Gastrocnemius medialis (tissue), 4 donors: ENCODE measurements at regions of chr20 and their contacts with region 1.

Region 1: GRCh38 chr20:50987592-50988210 is 29.1 kb downstream of the MOCS3 start:
- DNase-seq: peak; percentile 48
- ATAC-seq: peak; percentile 98 to 99
- H3K4me3 ChIP-seq: no peak overlapping the region
- H3K27ac ChIP-seq: no peak overlapping the region
- H3K4me1 ChIP-seq: peaks cover 0 to 3% of the 10 kb centered on the region in 2 donors
- H3K27me3 ChIP-seq: peaks cover 15 to 24% (median 21%) of the 10 kb centered on the region in 3 donors
- CTCF ChIP-seq: peak; percentile 74 to 88 (median 84)
- POLR2A ChIP-seq: no peak

Region 2: GRCh38 chr20:51022803-51023630 is 35.3 kb after region 1 on chr20 and contains the start of gene KCNG1:
- in situ Hi-C with region 1: no loop called
- intact Hi-C with region 1: no loop called
- DNase-seq: no peak
- ATAC-seq: peak; percentile 56 to 58
- H3K4me3 ChIP-seq: peak within 1 kb of the TSS; percentile 39 to 46 (median 43)
- H3K27ac ChIP-seq: no peak within 1 kb of the TSS
- H3K4me1 ChIP-seq: peaks cover 0 to 4% of the 10 kb centered on the region in 2 donors
- H3K27me3 ChIP-seq: peaks cover 18 to 24% (median 22%) of the 10 kb centered on the region in 3 donors
- CTCF ChIP-seq: no peak
- POLR2A ChIP-seq: no peak
- total RNA-seq, gene KCNG1: not detected

Region 3: DNA sequence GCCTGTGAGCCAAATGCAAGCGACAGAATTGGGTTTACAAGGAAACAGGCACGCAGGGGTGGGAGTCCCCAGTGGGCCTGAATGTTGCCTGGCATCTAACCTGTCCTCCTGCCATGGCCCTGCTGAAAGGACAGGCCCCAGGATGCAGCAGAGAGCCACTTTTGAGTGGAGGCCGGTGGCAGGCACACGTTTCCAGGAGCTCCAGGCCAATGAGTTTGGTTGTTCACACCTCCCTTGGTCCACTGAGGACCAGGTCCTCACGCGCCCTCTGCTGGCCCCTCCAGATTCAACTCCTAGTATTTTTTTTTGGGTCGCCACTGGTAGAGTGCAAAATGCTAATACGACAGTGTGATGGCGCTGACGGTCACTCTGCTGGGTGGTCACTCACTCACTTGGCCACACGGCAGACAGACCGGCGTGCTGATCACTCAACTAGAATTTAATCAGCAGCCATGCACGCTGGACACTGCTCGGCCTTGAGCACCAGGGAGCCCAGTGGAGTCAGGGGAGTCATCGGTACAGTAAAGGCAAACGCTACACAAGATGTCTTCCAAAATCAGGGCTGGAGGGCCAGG is 636.5 kb after region 1 on chr20:
- in situ Hi-C with region 1: loop called in 2 of 4 experiments (anchors 25 kb)
- intact Hi-C with region 1: no loop called
- DNase-seq: no peak
- ATAC-seq: no peak
- H3K4me3 ChIP-seq: no peak overlapping the region
- H3K27ac ChIP-seq: no peak overlapping the region
- H3K4me1 ChIP-seq: no peaks in the 10 kb centered on the region
- H3K27me3 ChIP-seq: no peaks in the 10 kb centered on the region
- CTCF ChIP-seq: peak in 3 of 5 experiments; percentile 42 to 58 (median 44)
- POLR2A ChIP-seq: no peak